Gastrocnemius medialis (tissue), 4 donors: ENCODE measurements at regions of chr16 and their contacts with region 1.

Region 1: GRCh38 chr16:70715055-70715858 is 29.4 kb upstream of the MTSS2 start:
- DNase-seq: peak; percentile 91 to 99
- ATAC-seq: peak; percentile 83 to 87
- H3K4me3 ChIP-seq: peak overlapping the region; percentile 5 to 21 (median 12)
- H3K27ac ChIP-seq: peak overlapping the region; percentile 94 to 97 (median 96)
- H3K4me1 ChIP-seq: peaks cover 37 to 39% of the 10 kb centered on the region in 2 donors
- H3K27me3 ChIP-seq: no peaks in the 10 kb centered on the region
- CTCF ChIP-seq: peak in 4 of 5 experiments; percentile 6 to 34 (median 14)
- POLR2A ChIP-seq: peak; percentile 65

Region 2: GRCh38 chr16:70685938-70686375 is 29.3 kb before region 1 on chr16 and contains the start of gene MTSS2:
- in situ Hi-C with region 1: no loop called
- intact Hi-C with region 1: loop called (anchors 1 kb)
- DNase-seq: peak; percentile 80 to 88
- ATAC-seq: peak; percentile 51 to 63
- H3K4me3 ChIP-seq: peak within 1 kb of the TSS; percentile 70 to 80 (median 72)
- H3K27ac ChIP-seq: peak within 1 kb of the TSS; percentile 88 to 97 (median 94)
- H3K4me1 ChIP-seq: peaks cover 73 to 90% of the 10 kb centered on the region in 2 donors
- H3K27me3 ChIP-seq: no peaks in the 10 kb centered on the region
- CTCF ChIP-seq: peak in 3 of 5 experiments; percentile 3 to 38 (median 29)
- POLR2A ChIP-seq: peak; percentile 83 to 89
- total RNA-seq, gene MTSS2: 42.6 to 160 (median 93.9) TPM

Region 3: GRCh38 chr16:70700101-70701020 is 14.9 kb before region 1 on chr16:
- in situ Hi-C with region 1: no loop called
- intact Hi-C with region 1: loop called (anchors 2 kb)
- DNase-seq: peak; percentile 72 to 92
- ATAC-seq: peak; percentile 59 to 63
- H3K4me3 ChIP-seq: no peak overlapping the region
- H3K27ac ChIP-seq: peak overlapping the region; percentile 74 to 83 (median 80)
- H3K4me1 ChIP-seq: peaks cover 66 to 78% of the 10 kb centered on the region in 2 donors
- H3K27me3 ChIP-seq: no peaks in the 10 kb centered on the region
- CTCF ChIP-seq: peak in 2 of 5 experiments; percentile 27
- POLR2A ChIP-seq: peak in 1 of 2 donors; percentile 52

Region 4: GRCh38 chr16:70737377-70738082 is 22.3 kb after region 1 on chr16:
- in situ Hi-C with region 1: no loop called
- intact Hi-C with region 1: loop called (anchors 1 kb)
- DNase-seq: peak; percentile 77 to 83
- ATAC-seq: peak; percentile 77 to 89
- H3K4me3 ChIP-seq: peak overlapping the region in 2 of 4 donors; percentile 5 to 34
- H3K27ac ChIP-seq: peak overlapping the region; percentile 86 to 91 (median 90)
- H3K4me1 ChIP-seq: peaks cover 39 to 45% of the 10 kb centered on the region in 2 donors
- H3K27me3 ChIP-seq: no peaks in the 10 kb centered on the region
- CTCF ChIP-seq: no peak
- POLR2A ChIP-seq: peak; percentile 51 to 69

Region 5: GRCh38 chr16:70788561-70789225 is 73.4 kb after region 1 on chr16:
- in situ Hi-C with region 1: no loop called
- intact Hi-C with region 1: no loop called
- DNase-seq: peak; percentile 33 to 72
- ATAC-seq: peak; percentile 94 to 95
- H3K4me3 ChIP-seq: no peak overlapping the region
- H3K27ac ChIP-seq: peak overlapping the region; percentile 27 to 75 (median 64)
- H3K4me1 ChIP-seq: peaks cover 21 to 22% of the 10 kb centered on the region in 2 donors
- H3K27me3 ChIP-seq: no peaks in the 10 kb centered on the region
- CTCF ChIP-seq: no peak
- POLR2A ChIP-seq: no peak